ENCODE measurements at regions of chr3 and their contacts with region 1.

Region 1: GRCh38 chr3:67790043-67790442 is 135.6 kb upstream of the SUCLG2 start:
- DNase-seq: peak; percentile 47 to 85 (median 64)
- ATAC-seq: peak; percentile 78
- H3K4me3 ChIP-seq: no peak overlapping the region
- H3K4me3 Mint-ChIP-seq: no peak overlapping the region
- H3K27ac ChIP-seq: no peak overlapping the region
- H3K27ac Mint-ChIP-seq: no peak overlapping the region
- H3K4me1 ChIP-seq: peaks cover 6% of the 10 kb centered on the region
- H3K4me1 Mint-ChIP-seq: peaks cover 13% of the 10 kb centered on the region
- H3K27me3 ChIP-seq: no peaks in the 10 kb centered on the region
- H3K27me3 Mint-ChIP-seq: no peaks in the 10 kb centered on the region
- CTCF ChIP-seq: peak; percentile 70

Region 2: DNA sequence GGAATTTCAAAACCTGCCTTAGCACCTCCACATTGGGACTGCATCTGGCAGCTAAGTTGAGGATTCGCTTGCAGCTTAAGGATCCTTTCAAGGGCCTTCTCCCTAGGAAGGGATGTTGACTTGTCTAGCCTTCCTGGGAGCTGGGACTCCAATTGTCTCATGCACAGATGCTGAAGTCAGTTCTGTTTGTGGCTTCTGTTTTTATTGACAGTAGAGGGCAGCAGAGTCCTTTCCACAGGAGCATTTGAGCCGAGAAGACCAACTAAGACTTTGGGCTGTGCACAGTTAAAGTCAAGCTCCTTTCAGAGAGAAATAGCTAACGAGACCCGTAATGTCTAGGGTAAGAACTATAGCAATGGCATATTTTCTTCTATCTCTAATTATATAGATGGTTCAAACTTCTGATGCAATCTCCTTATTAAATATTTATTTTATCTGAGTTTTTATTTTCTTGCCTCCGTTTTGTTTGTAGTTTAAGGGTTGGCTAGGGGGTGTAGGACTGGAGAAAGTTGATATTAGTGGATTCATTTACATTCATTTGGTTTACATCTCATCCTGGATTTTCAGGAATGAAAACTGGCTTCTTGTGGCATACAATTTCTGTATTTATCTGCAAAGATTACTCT is 851.6 kb before region 1 on chr3:
- CTCF ChIA-PET with region 1: no interaction called
- POLR2A ChIA-PET with region 1: no interaction called
- intact Hi-C with region 1: loop called in 1 of 2 experiments (anchors 2 kb)
- DNase-seq: peak in 6 of 9 experiments; percentile 1 to 59 (median 15)
- ATAC-seq: no peak
- H3K4me3 ChIP-seq: no peak overlapping the region
- H3K4me3 Mint-ChIP-seq: no peak overlapping the region
- H3K27ac ChIP-seq: no peak overlapping the region
- H3K27ac Mint-ChIP-seq: no peak overlapping the region
- H3K4me1 ChIP-seq: no peaks in the 10 kb centered on the region
- H3K4me1 Mint-ChIP-seq: no peaks in the 10 kb centered on the region
- H3K27me3 ChIP-seq: no peaks in the 10 kb centered on the region
- H3K27me3 Mint-ChIP-seq: peaks cover 29% of the 10 kb centered on the region
- CTCF ChIP-seq: peak; percentile 34

Region 3: GRCh38 chr3:67529337-67529736 is 260.7 kb before region 1 on chr3:
- CTCF ChIA-PET with region 1: interaction called, 10 read pairs
- POLR2A ChIA-PET with region 1: no interaction called
- intact Hi-C with region 1: no loop called
- DNase-seq: no peak
- ATAC-seq: no peak
- H3K4me3 ChIP-seq: no peak overlapping the region
- H3K4me3 Mint-ChIP-seq: no peak overlapping the region
- H3K27ac ChIP-seq: no peak overlapping the region
- H3K27ac Mint-ChIP-seq: no peak overlapping the region
- H3K4me1 ChIP-seq: peaks cover 10% of the 10 kb centered on the region
- H3K4me1 Mint-ChIP-seq: peaks cover 31% of the 10 kb centered on the region
- H3K27me3 ChIP-seq: no peaks in the 10 kb centered on the region
- H3K27me3 Mint-ChIP-seq: no peaks in the 10 kb centered on the region
- CTCF ChIP-seq: no peak

Region 4: DNA sequence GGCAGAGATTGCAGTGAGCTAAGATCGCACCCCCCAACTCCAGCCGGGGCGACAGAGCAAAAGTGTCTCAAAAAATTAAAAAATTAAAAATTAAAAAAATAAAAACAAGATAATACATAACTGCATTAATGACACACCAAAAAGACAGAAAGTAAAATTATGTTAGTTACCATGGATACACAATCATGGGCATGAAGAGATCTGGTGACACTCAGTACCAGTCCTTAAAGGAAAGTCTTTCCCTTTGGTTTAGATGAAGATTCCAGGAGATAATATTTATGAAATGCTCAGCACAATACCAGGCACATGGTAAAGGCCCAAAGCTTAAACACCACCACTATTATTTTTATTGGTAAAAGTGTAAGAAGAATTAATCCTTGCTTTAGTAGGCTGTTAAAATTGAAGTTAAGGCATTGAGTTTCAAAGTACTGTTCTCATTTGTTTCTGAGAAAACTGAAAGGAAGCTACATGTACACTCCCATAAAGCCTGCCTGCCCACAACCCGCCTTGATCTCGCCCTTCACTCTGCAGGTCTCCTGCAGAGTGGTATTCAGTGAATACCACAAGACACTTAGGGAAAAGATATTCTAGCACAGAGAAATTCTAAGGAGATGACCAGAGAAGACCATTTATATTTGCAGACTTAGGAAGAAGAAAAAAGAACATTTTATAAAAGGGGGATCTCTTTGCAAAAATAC is 188.0 kb before region 1 on chr3:
- CTCF ChIA-PET with region 1: interaction called, 7 read pairs
- POLR2A ChIA-PET with region 1: no interaction called
- intact Hi-C with region 1: loop called in 1 of 2 experiments (anchors 5 kb)
- DNase-seq: peak in 4 of 9 experiments; percentile 9 to 48 (median 14)
- ATAC-seq: peak; percentile 38
- H3K4me3 ChIP-seq: no peak overlapping the region
- H3K4me3 Mint-ChIP-seq: peak overlapping the region; percentile 74
- H3K27ac ChIP-seq: peak overlapping the region; percentile 16 to 55
- H3K27ac Mint-ChIP-seq: peak overlapping the region; percentile 90
- H3K4me1 ChIP-seq: peaks cover 76% of the 10 kb centered on the region
- H3K4me1 Mint-ChIP-seq: peaks cover 87% of the 10 kb centered on the region
- H3K27me3 ChIP-seq: no peaks in the 10 kb centered on the region
- H3K27me3 Mint-ChIP-seq: no peaks in the 10 kb centered on the region
- CTCF ChIP-seq: no peak

Region 5: GRCh38 chr3:67765575-67765974 is 24.5 kb before region 1 on chr3:
- CTCF ChIA-PET with region 1: interaction called, 12 read pairs
- POLR2A ChIA-PET with region 1: interaction called, 3 read pairs
- intact Hi-C with region 1: no loop called
- DNase-seq: no peak
- ATAC-seq: no peak
- H3K4me3 ChIP-seq: no peak overlapping the region
- H3K4me3 Mint-ChIP-seq: no peak overlapping the region
- H3K27ac ChIP-seq: no peak overlapping the region
- H3K27ac Mint-ChIP-seq: no peak overlapping the region
- H3K4me1 ChIP-seq: no peaks in the 10 kb centered on the region
- H3K4me1 Mint-ChIP-seq: no peaks in the 10 kb centered on the region
- H3K27me3 ChIP-seq: no peaks in the 10 kb centered on the region
- H3K27me3 Mint-ChIP-seq: no peaks in the 10 kb centered on the region
- CTCF ChIP-seq: no peak

Region 6: GRCh38 chr3:68706096-68706495 is 916.1 kb after region 1 on chr3:
- CTCF ChIA-PET with region 1: no interaction called
- POLR2A ChIA-PET with region 1: no interaction called
- intact Hi-C with region 1: no loop called
- DNase-seq: no peak
- ATAC-seq: no peak
- H3K4me3 ChIP-seq: no peak overlapping the region
- H3K4me3 Mint-ChIP-seq: no peak overlapping the region
- H3K27ac ChIP-seq: no peak overlapping the region
- H3K27ac Mint-ChIP-seq: no peak overlapping the region
- H3K4me1 ChIP-seq: no peaks in the 10 kb centered on the region
- H3K4me1 Mint-ChIP-seq: no peaks in the 10 kb centered on the region
- H3K27me3 ChIP-seq: no peaks in the 10 kb centered on the region
- H3K27me3 Mint-ChIP-seq: no peaks in the 10 kb centered on the region
- CTCF ChIP-seq: no peak

Measured in CD8-positive, alpha-beta T cell (primary cell).